ENCODE measurements at regions of chr5 and their contacts with region 1.

Region 1: DNA sequence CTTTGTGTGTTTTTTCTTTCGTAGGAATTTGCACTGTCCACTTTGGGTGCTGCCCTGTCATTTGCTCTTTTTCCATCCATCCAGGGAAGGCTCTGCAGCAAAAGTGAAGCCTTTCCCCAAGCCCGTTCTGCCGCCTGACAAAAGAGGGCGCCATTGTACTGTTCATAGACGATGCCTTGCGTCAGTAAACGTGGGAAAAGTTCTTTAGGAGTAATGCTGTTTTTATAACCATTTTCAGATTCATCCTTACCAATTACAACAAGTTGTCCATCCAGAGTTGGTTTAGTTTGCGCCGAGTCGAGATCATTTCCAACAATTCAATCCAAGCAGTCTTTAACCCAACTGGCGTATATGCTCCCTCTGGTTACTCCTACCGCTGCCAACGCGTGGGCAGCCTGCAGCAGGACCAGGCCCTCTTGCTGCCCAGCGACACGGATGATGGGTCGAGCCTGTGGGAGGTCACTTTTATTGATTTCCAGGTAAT is 34.3 kb upstream of the RPS23 start:
- DNase-seq: peak; percentile 20
- H3K4me3 Mint-ChIP-seq: no peak overlapping the region
- H3K27ac Mint-ChIP-seq: no peak overlapping the region
- H3K4me1 Mint-ChIP-seq: no peaks in the 10 kb centered on the region
- H3K27me3 Mint-ChIP-seq: no peaks in the 10 kb centered on the region

Region 2: DNA sequence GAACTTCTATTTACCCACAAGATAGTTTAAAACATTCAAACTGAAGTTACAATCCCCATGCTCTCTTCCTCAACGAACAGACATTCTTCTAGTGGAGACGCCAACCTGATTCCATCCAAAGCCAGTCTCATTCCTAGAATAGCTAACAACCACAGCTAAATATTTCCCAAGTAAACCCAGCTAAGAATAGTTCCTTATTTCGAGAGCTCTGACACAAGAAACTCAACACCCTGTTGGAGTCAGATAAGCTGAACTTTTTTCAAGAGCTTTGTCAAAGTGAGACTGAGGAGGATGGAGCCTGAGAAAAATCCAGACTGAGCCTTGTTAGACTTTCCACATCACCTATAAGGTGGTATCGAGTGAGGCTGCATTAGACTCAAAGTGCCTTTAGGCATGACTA is 22.4 kb after region 1 on chr5:
- intact Hi-C with region 1: no loop called
- DNase-seq: no peak
- H3K4me3 Mint-ChIP-seq: no peak overlapping the region
- H3K27ac Mint-ChIP-seq: no peak overlapping the region
- H3K4me1 Mint-ChIP-seq: no peaks in the 10 kb centered on the region
- H3K27me3 Mint-ChIP-seq: peaks cover 19% of the 10 kb centered on the region

Region 3: DNA sequence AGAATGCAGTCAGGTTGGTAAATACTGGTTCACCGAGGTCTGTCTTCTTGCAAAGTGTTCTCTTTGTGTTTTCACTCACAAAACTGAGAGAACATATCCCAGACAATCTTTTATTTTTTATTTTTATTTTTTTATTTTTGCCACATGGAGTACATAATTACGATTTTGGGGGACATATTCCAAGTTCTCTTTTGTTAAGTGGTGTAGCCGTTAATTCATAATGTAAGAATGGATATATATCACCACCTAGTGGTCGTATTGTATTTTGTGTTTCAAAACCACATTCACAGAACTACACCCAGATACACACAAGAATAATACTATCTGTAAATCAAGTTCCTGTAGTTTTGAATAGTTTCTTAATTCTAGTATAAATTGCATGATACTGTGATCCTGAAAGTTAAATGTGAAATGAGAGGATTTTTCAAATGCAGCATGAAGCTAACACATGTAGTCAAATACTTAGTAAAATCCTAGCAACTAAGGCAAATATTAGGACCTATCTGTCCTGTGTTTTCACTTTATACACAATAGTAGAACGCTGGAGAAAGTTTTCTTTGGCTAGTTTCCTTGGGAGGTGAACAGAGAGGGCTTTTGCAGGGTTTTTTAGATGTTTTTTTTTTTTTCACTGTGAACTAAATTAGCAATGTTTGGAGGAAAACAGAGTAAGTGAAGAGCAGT is 1251.8 kb after region 1 on chr5:
- intact Hi-C with region 1: loop called (anchors 2 kb)
- DNase-seq: no peak
- H3K4me3 Mint-ChIP-seq: no peak overlapping the region
- H3K27ac Mint-ChIP-seq: no peak overlapping the region
- H3K4me1 Mint-ChIP-seq: peaks cover 3% of the 10 kb centered on the region
- H3K27me3 Mint-ChIP-seq: peaks cover 18% of the 10 kb centered on the region